CD4-positive, alpha-beta T cell (primary cell): ENCODE measurements at regions of chr11 and their contacts with region 1.

Region 1: GRCh38 chr11:14643697-14644225 is at the start of gene PDE3B:
- DNase-seq: peak; percentile 39 to 89 (median 70)
- ATAC-seq: peak; percentile 59
- H3K4me3 ChIP-seq: peak within 1 kb of the TSS; percentile 91
- H3K4me3 Mint-ChIP-seq: peak within 1 kb of the TSS; percentile 96
- H3K27ac ChIP-seq: peak within 1 kb of the TSS; percentile 35 to 80
- H3K27ac Mint-ChIP-seq: peak within 1 kb of the TSS; percentile 90
- H3K4me1 ChIP-seq: peaks cover 15% of the 10 kb centered on the region
- H3K4me1 Mint-ChIP-seq: peaks cover 58% of the 10 kb centered on the region
- H3K27me3 ChIP-seq: no peaks in the 10 kb centered on the region
- H3K27me3 Mint-ChIP-seq: no peaks in the 10 kb centered on the region
- CTCF ChIP-seq: no peak
- total RNA-seq, gene PDE3B: 103 to 106 TPM

Region 2: DNA sequence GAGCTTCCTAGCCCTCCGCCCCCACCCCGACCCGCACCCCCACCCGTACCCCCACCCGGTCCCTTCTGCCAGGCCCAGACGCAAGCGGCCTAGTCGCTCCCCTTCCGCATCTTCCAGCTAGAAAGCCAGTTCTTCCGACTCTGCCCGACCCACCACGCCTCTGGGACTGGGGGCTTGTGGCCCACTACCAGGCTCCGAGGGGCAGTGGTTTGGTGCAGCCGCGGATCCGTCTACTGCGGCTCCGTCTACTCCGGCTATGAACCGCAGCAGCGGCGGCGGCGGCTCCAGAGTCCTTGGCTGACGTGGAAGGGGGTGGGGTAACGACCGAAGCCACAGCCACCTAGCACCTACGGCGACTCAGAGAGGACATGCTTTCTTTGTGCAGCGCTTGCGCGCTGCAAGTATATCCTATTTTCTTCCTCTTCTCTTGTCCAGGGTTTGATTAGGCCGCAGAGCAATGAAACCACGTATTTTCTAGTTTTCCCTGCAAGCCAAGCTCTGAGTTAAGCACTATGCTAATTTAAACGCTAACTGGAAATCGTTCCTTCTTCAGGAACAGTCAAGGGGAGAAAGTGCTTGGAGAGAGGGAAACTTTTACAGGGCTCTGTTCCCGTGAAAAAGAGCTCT is 144.1 kb before region 1 on chr11 and contains the start of gene COPB1:
- CTCF ChIA-PET with region 1: interaction called, 4 read pairs
- POLR2A ChIA-PET with region 1: interaction called, 15 read pairs
- intact Hi-C with region 1: loop called in 1 of 2 experiments (anchors 1 kb)
- DNase-seq: peak; percentile 84 to 96 (median 90)
- ATAC-seq: peak; percentile 94
- H3K4me3 ChIP-seq: peak within 1 kb of the TSS; percentile 85
- H3K4me3 Mint-ChIP-seq: peak within 1 kb of the TSS; percentile 97
- H3K27ac ChIP-seq: peak within 1 kb of the TSS; percentile 67 to 84
- H3K27ac Mint-ChIP-seq: peak within 1 kb of the TSS; percentile 92
- H3K4me1 ChIP-seq: peaks cover 6% of the 10 kb centered on the region
- H3K4me1 Mint-ChIP-seq: peaks cover 53% of the 10 kb centered on the region
- H3K27me3 ChIP-seq: no peaks in the 10 kb centered on the region
- H3K27me3 Mint-ChIP-seq: no peaks in the 10 kb centered on the region
- CTCF ChIP-seq: no peak
- total RNA-seq, gene COPB1: 93.1 to 95.9 TPM

Region 3: DNA sequence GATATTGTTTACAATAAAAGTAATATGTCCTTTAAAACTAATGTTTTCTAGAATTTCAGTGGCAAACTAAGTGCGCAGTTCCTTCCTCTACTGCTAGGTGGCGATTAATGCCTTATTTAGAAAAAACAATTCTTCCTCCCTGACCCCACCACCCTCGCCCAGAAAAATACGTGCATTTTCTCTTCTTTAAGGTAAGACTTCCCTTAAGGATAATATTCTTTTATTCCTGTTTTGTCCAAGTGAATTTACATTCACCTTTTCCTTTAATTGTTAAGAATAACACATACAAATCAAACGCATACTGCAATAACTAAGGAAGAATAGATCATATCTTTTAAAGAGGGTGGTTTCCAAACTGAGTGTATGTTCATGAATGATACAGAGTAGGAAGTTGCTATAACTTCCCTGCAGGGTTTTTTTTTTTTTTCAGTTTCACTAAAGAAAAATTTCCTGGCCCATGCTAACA is 106.6 kb before region 1 on chr11:
- CTCF ChIA-PET with region 1: interaction called, 10 read pairs
- POLR2A ChIA-PET with region 1: interaction called, 10 read pairs
- intact Hi-C with region 1: loop called (anchors 1 to 2 kb)
- DNase-seq: peak in 13 of 14 experiments; percentile 11 to 75 (median 37)
- ATAC-seq: peak; percentile 94
- H3K4me3 ChIP-seq: peak overlapping the region; percentile 7
- H3K4me3 Mint-ChIP-seq: peak overlapping the region; percentile 63
- H3K27ac ChIP-seq: no peak overlapping the region
- H3K27ac Mint-ChIP-seq: peak overlapping the region; percentile 63
- H3K4me1 ChIP-seq: peaks cover 7% of the 10 kb centered on the region
- H3K4me1 Mint-ChIP-seq: peaks cover 39% of the 10 kb centered on the region
- H3K27me3 ChIP-seq: no peaks in the 10 kb centered on the region
- H3K27me3 Mint-ChIP-seq: no peaks in the 10 kb centered on the region
- CTCF ChIP-seq: peak; percentile 96

Region 4: GRCh38 chr11:14619603-14620531 is 23.9 kb before region 1 on chr11:
- CTCF ChIA-PET with region 1: interaction called, 5 read pairs
- POLR2A ChIA-PET with region 1: interaction called, 11 read pairs
- intact Hi-C with region 1: no loop called
- DNase-seq: no peak
- ATAC-seq: no peak
- H3K4me3 ChIP-seq: no peak overlapping the region
- H3K4me3 Mint-ChIP-seq: no peak overlapping the region
- H3K27ac ChIP-seq: no peak overlapping the region
- H3K27ac Mint-ChIP-seq: no peak overlapping the region
- H3K4me1 ChIP-seq: peaks cover 2% of the 10 kb centered on the region
- H3K4me1 Mint-ChIP-seq: peaks cover 78% of the 10 kb centered on the region
- H3K27me3 ChIP-seq: no peaks in the 10 kb centered on the region
- H3K27me3 Mint-ChIP-seq: no peaks in the 10 kb centered on the region
- CTCF ChIP-seq: no peak

Region 5: DNA sequence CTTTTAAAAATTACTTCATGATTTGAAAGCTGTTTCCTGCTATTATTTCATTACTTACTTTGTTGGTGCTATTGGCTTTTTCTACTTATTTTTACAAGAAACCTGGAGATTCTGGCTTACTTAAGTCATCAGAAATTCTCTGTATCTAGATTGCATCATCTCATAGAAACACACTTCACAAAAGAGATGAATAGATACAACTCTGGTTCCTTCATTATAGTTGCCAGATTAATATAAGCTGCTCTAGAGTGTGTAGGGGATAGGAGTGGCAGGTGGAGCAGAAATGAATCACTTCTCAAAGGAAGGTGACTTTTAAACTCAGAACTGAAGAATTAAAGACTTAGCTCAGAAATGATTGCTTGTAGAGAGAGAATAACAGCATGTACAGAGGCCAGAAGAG is 228.3 kb after region 1 on chr11:
- CTCF ChIA-PET with region 1: no interaction called
- POLR2A ChIA-PET with region 1: no interaction called
- intact Hi-C with region 1: no loop called
- DNase-seq: no peak
- ATAC-seq: no peak
- H3K4me3 ChIP-seq: no peak overlapping the region
- H3K4me3 Mint-ChIP-seq: no peak overlapping the region
- H3K27ac ChIP-seq: no peak overlapping the region
- H3K27ac Mint-ChIP-seq: peak overlapping the region; percentile 1
- H3K4me1 ChIP-seq: no peaks in the 10 kb centered on the region
- H3K4me1 Mint-ChIP-seq: peaks cover 4% of the 10 kb centered on the region
- H3K27me3 ChIP-seq: no peaks in the 10 kb centered on the region
- H3K27me3 Mint-ChIP-seq: no peaks in the 10 kb centered on the region
- CTCF ChIP-seq: no peak

Region 6: DNA sequence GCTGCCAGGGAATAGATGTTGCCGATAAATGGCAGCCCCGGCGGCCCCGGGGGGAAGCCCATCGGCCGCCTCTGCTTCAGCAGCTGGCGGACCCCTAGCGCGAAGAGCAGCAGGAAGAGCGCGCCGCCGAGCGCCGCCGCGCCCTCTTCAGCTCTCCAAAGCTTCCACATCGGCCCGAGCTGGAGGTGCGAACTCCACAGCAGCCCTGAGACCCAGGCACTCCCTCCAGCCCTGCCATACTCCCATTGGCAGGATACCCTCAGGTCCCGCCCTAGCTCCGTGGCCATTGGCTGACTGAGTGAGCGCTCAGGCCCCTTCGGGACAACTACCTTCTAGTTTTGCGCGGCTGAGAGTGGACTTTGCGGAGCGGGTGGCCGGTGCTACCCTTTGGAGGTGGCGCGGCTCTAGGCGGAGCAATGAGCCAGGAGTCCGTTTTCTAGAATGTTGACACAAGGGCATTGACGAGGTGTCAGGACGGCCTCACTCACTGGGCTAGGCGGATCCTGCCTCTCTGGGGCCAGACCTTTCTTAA is 248.3 kb after region 1 on chr11 and contains the start of gene CYP2R1:
- CTCF ChIA-PET with region 1: interaction called, 7 read pairs
- POLR2A ChIA-PET with region 1: interaction called, 14 read pairs
- intact Hi-C with region 1: loop called in 1 of 2 experiments (anchors 5 kb)
- DNase-seq: peak; percentile 79 to 95 (median 86)
- ATAC-seq: peak; percentile 82
- H3K4me3 ChIP-seq: peak within 1 kb of the TSS; percentile 94
- H3K4me3 Mint-ChIP-seq: peak within 1 kb of the TSS; percentile 96
- H3K27ac ChIP-seq: peak within 1 kb of the TSS; percentile 81 to 88
- H3K27ac Mint-ChIP-seq: peak within 1 kb of the TSS; percentile 94
- H3K4me1 ChIP-seq: peaks cover 31% of the 10 kb centered on the region
- H3K4me1 Mint-ChIP-seq: peaks cover 35% of the 10 kb centered on the region
- H3K27me3 ChIP-seq: no peaks in the 10 kb centered on the region
- H3K27me3 Mint-ChIP-seq: no peaks in the 10 kb centered on the region
- CTCF ChIP-seq: no peak
- total RNA-seq, gene CYP2R1: 14.2 to 15.8 TPM